ENCODE measurements at regions of chr10 and their contacts with region 1.

Region 1: DNA sequence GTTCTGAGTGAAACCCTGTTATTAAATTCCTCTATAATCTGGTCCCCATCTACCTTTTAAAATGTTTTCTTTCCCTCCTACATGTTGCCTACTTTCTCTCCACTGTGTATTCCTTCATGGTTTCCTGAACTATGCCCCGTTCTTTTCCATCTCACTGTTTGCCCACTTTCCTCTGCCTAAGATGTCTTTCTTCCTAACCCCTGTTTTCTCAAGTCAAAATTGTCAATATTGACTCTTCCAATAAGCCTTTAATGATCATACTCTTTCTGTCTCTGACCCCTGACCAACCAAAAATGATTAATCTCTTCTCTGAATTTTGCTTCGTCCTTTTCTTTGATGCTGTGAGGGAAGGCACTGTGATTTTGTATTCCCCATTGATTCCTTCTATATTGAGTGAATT is 30.6 kb upstream of the OIT3 start:
- DNase-seq: no peak
- H3K4me3 Mint-ChIP-seq: no peak overlapping the region
- H3K27ac Mint-ChIP-seq: no peak overlapping the region
- H3K4me1 Mint-ChIP-seq: no peaks in the 10 kb centered on the region
- H3K27me3 Mint-ChIP-seq: no peaks in the 10 kb centered on the region

Region 2: DNA sequence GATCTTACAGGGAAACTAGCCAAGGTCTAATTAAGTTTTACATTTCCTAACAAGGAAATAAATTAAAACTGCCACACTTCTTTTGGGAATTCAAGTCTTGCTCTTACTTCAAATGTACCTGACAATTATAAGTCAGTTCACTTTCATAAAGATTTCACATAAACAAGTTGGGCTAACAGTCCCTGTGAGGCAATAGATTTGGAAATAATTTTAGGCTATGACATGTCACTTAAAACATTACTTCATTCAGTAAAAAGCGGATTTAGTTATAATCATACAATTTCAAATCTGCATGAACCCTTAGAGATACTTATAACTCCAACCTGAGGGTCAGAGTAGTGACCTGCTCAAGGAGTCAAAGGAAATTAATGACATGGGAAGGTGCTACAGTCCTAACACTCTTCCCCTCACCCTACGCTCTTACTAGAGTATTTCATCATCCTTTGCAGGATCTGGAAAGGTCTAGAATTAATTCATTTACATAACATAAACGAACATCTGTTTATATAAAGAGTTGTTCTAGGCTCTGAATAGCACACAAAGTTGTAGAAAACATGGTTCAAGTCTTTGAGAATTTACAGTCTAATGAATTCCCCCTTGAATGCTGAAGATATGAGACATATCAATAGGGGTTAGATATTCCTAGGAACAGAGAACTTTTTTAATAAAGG is 475.9 kb before region 1 on chr10:
- intact Hi-C with region 1: no loop called
- DNase-seq: no peak
- H3K4me3 Mint-ChIP-seq: no peak overlapping the region
- H3K27ac Mint-ChIP-seq: no peak overlapping the region
- H3K4me1 Mint-ChIP-seq: no peaks in the 10 kb centered on the region
- H3K27me3 Mint-ChIP-seq: no peaks in the 10 kb centered on the region

Region 3: GRCh38 chr10:72875250-72876055 is 12.5 kb after region 1 on chr10:
- intact Hi-C with region 1: loop called (anchors 1 kb)
- DNase-seq: no peak
- H3K4me3 Mint-ChIP-seq: no peak overlapping the region
- H3K27ac Mint-ChIP-seq: no peak overlapping the region
- H3K4me1 Mint-ChIP-seq: no peaks in the 10 kb centered on the region
- H3K27me3 Mint-ChIP-seq: no peaks in the 10 kb centered on the region

Region 4: DNA sequence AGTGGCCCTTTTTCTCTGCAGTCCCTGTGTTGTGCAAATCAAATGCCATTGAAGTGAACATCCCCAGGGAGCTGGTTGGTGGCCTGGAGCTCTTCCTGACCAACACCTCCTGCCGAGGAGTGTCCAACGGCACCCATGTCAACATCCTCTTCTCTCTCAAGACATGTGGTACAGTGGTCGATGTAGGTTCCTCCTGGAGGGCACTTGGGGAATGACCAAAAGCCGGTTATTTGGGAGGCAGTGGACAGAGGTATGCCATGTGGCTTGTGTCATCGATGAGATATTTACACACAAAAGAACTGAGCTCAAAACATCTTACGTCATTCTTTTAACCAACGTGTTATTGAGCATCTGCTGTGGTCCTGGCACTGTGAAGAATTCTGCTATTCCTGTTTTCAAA is 50.3 kb after region 1 on chr10:
- intact Hi-C with region 1: no loop called
- DNase-seq: no peak
- H3K4me3 Mint-ChIP-seq: no peak overlapping the region
- H3K27ac Mint-ChIP-seq: no peak overlapping the region
- H3K4me1 Mint-ChIP-seq: no peaks in the 10 kb centered on the region
- H3K27me3 Mint-ChIP-seq: peaks cover 5% of the 10 kb centered on the region

Region 5: GRCh38 chr10:73879296-73880173 is 1016.6 kb after region 1 on chr10:
- intact Hi-C with region 1: no loop called
- DNase-seq: peak; percentile 90
- H3K4me3 Mint-ChIP-seq: no peak overlapping the region
- H3K27ac Mint-ChIP-seq: peak overlapping the region; percentile 53
- H3K4me1 Mint-ChIP-seq: peaks cover 53% of the 10 kb centered on the region
- H3K27me3 Mint-ChIP-seq: peaks cover 16% of the 10 kb centered on the region